ENCODE measurements at regions of chr10 and their contacts with region 1.

Region 1: GRCh38 chr10:90227217-90227656 is 525.8 kb downstream of the KIF20B start:
- DNase-seq: peak; percentile 99
- ATAC-seq: peak; percentile 84
- H3K4me3 ChIP-seq: no peak overlapping the region
- H3K27ac ChIP-seq: peak overlapping the region; percentile 94
- H3K4me1 ChIP-seq: peaks cover 40 to 61% of the 10 kb centered on the region in 2 experiments
- H3K27me3 ChIP-seq: no peaks in the 10 kb centered on the region
- CTCF ChIP-seq: no peak
- POLR2A ChIP-seq: no peak
- RAD21 ChIP-seq: peak; percentile 60

Region 2: DNA sequence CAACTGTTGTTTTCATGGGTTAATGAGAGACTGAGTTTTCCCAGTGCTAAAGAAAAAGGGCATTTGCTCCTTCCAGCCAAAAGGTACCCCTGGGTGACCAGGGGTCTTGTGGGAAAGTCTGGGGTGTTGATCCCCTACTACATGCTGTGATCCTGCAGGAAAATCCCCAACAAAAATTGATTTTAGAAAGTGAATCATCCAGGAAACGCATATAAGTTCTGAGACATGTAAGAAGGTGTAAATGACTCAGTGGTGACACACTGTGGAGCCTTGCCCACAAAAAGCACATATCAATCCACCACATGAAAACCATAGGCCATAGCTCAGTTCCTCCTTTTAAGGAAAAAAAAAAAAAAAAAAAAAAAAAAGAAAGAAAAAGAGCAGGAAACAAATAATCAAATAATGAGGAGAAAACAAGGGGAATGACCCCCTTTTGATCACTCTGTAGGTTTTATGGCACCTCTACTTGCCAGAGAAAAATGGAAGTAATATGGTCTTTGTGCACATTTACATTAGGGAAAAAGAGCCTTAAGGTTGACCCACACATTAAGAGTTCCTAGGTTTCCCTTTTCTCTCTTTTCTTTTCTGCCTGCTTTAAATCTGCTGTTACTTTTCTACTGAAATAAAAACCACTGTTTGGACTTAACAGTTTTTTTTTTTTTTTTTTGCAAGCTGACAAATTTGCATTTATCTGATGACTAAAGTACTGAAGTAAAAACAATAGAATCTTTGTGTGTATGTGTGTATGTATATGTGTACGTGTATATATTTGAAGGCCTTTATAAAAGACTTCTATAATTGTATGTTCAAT is 139.8 kb before region 1 on chr10:
- CTCF ChIA-PET with region 1: no interaction called
- POLR2A ChIA-PET with region 1: no interaction called
- RAD21 ChIA-PET with region 1: no interaction called
- intact Hi-C with region 1: loop called (anchors 5 kb)
- DNase-seq: peak; percentile 98
- ATAC-seq: peak; percentile 98
- H3K4me3 ChIP-seq: peak overlapping the region in 1 of 2 experiments; percentile 7; a peak in 1 of 4 replicates
- H3K27ac ChIP-seq: peak overlapping the region; percentile 88
- H3K4me1 ChIP-seq: peaks cover 49 to 54% of the 10 kb centered on the region in 2 experiments
- H3K27me3 ChIP-seq: no peaks in the 10 kb centered on the region
- CTCF ChIP-seq: no peak
- POLR2A ChIP-seq: no peak
- RAD21 ChIP-seq: peak; percentile 49

Region 3: GRCh38 chr10:90319188-90319914 is 92.1 kb after region 1 on chr10:
- CTCF ChIA-PET with region 1: no interaction called
- POLR2A ChIA-PET with region 1: interaction called, 9 read pairs
- RAD21 ChIA-PET with region 1: no interaction called
- intact Hi-C with region 1: loop called (anchors 5 kb)
- DNase-seq: peak; percentile 96
- ATAC-seq: peak; percentile 87
- H3K4me3 ChIP-seq: no peak overlapping the region
- H3K27ac ChIP-seq: peak overlapping the region; percentile 99
- H3K4me1 ChIP-seq: peaks cover 64 to 74% of the 10 kb centered on the region in 2 experiments
- H3K27me3 ChIP-seq: no peaks in the 10 kb centered on the region
- CTCF ChIP-seq: no peak
- POLR2A ChIP-seq: no peak
- RAD21 ChIP-seq: peak; percentile 39

Region 4: GRCh38 chr10:90857635-90858460 is 630.6 kb after region 1 on chr10 and contains the start of gene HTR7:
- CTCF ChIA-PET with region 1: no interaction called
- POLR2A ChIA-PET with region 1: no interaction called
- RAD21 ChIA-PET with region 1: no interaction called
- intact Hi-C with region 1: loop called (anchors 10 kb)
- DNase-seq: no peak
- ATAC-seq: peak; percentile 79
- H3K4me3 ChIP-seq: peak within 1 kb of the TSS; percentile 68 to 76
- H3K27ac ChIP-seq: peak within 1 kb of the TSS; percentile 95
- H3K4me1 ChIP-seq: peaks cover 20 to 39% of the 10 kb centered on the region in 2 experiments
- H3K27me3 ChIP-seq: no peaks in the 10 kb centered on the region
- CTCF ChIP-seq: peak in 2 of 3 experiments; percentile 42 to 64; a peak in 4 of 6 replicates
- POLR2A ChIP-seq: no peak
- RAD21 ChIP-seq: no peak
- total RNA-seq, gene HTR7: 32.2 TPM

Region 5: GRCh38 chr10:92064506-92064905 is 1837.3 kb after region 1 on chr10:
- CTCF ChIA-PET with region 1: no interaction called
- POLR2A ChIA-PET with region 1: no interaction called
- RAD21 ChIA-PET with region 1: no interaction called
- intact Hi-C with region 1: no loop called
- DNase-seq: no peak
- ATAC-seq: no peak
- H3K4me3 ChIP-seq: no peak overlapping the region
- H3K27ac ChIP-seq: no peak overlapping the region
- H3K4me1 ChIP-seq: no peaks in the 10 kb centered on the region
- H3K27me3 ChIP-seq: no peaks in the 10 kb centered on the region
- CTCF ChIP-seq: no peak
- POLR2A ChIP-seq: no peak
- RAD21 ChIP-seq: no peak